HEK293T (cell line): ENCODE measurements at regions of chr2 and their contacts with region 1.

Region 1: DNA sequence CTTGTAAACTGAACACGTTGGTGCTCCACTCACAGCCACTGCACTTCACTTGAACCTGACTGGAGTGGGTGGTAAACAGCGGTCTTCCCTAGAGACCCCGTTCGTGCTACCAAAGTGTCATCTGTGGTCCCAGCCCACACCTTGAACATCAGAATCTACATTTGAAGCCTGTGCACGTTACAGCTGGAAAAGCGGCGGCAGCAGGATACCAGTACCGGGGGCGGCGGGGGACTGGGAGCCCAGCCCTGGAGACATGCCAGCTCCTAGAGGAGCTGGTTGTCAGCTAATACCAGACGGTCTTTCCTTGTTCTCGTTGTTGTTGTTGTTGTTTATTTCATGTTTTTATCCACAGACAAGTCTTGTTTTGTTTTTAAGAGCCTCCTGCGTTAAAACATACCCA is 156.7 kb downstream of the WDSUB1 start:
- DNase-seq: no peak

Region 2: DNA sequence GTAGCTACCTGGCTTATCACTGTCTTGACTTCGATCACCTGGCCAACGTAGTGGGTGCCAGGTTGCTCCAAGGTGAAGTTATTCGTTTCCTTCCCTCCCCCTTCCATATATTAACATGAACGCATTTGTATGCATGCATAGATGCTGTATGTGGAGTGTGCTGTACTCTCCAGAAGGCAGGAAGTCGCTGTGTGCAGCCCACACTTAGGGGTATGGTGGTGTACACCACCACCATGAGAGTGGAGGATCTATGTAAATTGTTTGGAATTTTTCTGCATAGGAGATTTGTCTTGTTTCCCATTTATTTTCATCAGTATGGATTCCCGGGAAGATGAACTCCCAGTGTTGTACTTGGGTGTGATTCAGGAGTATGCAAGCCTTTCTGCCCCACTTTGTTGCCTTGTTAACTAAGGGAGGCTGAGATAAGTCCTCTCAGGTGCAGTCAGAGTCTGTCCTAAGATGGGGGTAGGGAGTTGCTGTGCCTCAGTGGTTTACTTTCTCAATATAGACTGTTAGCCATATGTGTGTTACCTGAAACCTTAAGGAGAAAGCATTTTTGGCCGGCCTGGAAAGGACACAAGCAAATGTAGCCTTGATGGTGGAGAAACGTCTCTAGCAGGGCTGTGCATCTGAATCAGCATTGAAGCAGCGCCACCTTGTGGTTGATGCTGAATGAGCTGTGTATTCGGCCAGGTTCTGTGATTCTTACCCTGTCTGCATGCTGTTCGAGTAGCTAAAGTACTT is 11.5 kb before region 1 on chr2:
- CTCF ChIA-PET with region 1: interaction called, 18 read pairs
- POLR2A ChIA-PET with region 1: no interaction called
- DNase-seq: peak; percentile 76